Natural killer cell (primary cell): ENCODE measurements at regions of chr22 and their contacts with region 1.

Region 1: DNA sequence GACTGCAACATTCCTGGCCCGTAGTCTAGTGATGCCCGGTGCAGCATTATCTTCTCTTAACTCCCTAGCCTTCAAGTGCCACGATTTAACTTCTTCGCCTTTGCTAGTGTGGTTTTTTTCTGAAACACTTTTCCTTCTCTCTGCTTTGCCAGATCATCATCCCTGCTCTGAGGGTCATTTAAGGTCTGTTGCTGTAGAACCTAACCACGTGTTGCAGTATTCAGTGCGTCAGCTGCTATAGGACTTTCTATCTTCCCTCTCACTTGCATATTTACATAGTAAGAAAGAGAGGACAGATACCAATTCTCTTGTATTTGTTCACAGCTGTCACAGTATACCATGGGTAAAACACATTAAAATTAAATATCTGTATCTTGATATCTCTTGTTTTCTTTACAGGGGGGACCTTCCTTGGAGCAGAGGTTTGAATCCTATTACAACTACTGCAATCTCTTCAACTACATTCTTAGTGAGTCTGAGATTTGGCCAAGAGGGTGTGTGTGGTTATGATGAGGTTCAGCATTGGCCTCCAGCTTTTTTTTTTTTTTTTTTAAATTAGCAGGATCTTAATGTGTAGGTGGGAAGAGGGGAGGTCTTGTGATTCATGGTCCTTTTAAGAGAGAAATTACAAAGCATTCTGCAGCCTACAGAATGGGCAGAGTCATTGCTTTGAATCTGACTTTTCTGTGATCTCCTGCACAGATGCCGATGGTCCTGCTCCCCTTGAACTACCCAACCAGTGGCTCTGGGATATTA is 13.5 kb downstream of the EIF3L start:
- DNase-seq: no peak
- ATAC-seq: peak in 1 of 3 donors; percentile 17
- H3K4me3 ChIP-seq: no peak overlapping the region
- H3K4me3 Mint-ChIP-seq: no peak overlapping the region
- H3K27ac ChIP-seq: no peak overlapping the region
- H3K27ac Mint-ChIP-seq: no peak overlapping the region
- H3K4me1 ChIP-seq: no peaks in the 10 kb centered on the region
- H3K4me1 Mint-ChIP-seq: peaks cover 5 to 16% of the 10 kb centered on the region in 2 donors
- H3K27me3 ChIP-seq: no peaks in the 10 kb centered on the region
- H3K27me3 Mint-ChIP-seq: no peaks in the 10 kb centered on the region
- CTCF ChIP-seq: no peak

Region 2: GRCh38 chr22:37538590-37539357 is 324.0 kb before region 1 on chr22:
- intact Hi-C with region 1: loop called (anchors 2 kb)
- DNase-seq: peak; percentile 84 to 94
- ATAC-seq: peak; percentile 98 to 100 (median 100)
- H3K4me3 ChIP-seq: no peak overlapping the region
- H3K4me3 Mint-ChIP-seq: no peak overlapping the region
- H3K27ac ChIP-seq: no peak overlapping the region
- H3K27ac Mint-ChIP-seq: no peak overlapping the region
- H3K4me1 ChIP-seq: peaks cover 35% of the 10 kb centered on the region
- H3K4me1 Mint-ChIP-seq: peaks cover 7 to 19% of the 10 kb centered on the region in 2 donors
- H3K27me3 ChIP-seq: peaks cover 9% of the 10 kb centered on the region
- H3K27me3 Mint-ChIP-seq: peaks cover 7 to 22% of the 10 kb centered on the region in 2 donors
- CTCF ChIP-seq: peak; percentile 89

Region 3: GRCh38 chr22:37608477-37609239 is 254.1 kb before region 1 on chr22 and contains the start of gene GGA1:
- intact Hi-C with region 1: loop called (anchors 5 kb)
- DNase-seq: peak; percentile 92 to 99
- ATAC-seq: peak; percentile 77 to 94 (median 81)
- H3K4me3 ChIP-seq: peak within 1 kb of the TSS; percentile 84
- H3K4me3 Mint-ChIP-seq: peak within 1 kb of the TSS; percentile 98
- H3K27ac ChIP-seq: peak within 1 kb of the TSS; percentile 94
- H3K27ac Mint-ChIP-seq: peak within 1 kb of the TSS; percentile 98 to 99
- H3K4me1 ChIP-seq: peaks cover 61% of the 10 kb centered on the region
- H3K4me1 Mint-ChIP-seq: peaks cover 37 to 62% of the 10 kb centered on the region in 2 donors
- H3K27me3 ChIP-seq: no peaks in the 10 kb centered on the region
- H3K27me3 Mint-ChIP-seq: no peaks in the 10 kb centered on the region
- CTCF ChIP-seq: no peak
- total RNA-seq, gene GGA1: 69.3 to 87.8 (median 80.2) TPM

Region 4: GRCh38 chr22:37623075-37624016 is 239.4 kb before region 1 on chr22:
- intact Hi-C with region 1: loop called (anchors 1 kb)
- DNase-seq: peak; percentile 76 to 87
- ATAC-seq: peak; percentile 84 to 90 (median 86)
- H3K4me3 ChIP-seq: no peak overlapping the region
- H3K4me3 Mint-ChIP-seq: peak overlapping the region; percentile 76
- H3K27ac ChIP-seq: peak overlapping the region; percentile 52
- H3K27ac Mint-ChIP-seq: peak overlapping the region; percentile 88 to 89
- H3K4me1 ChIP-seq: peaks cover 52% of the 10 kb centered on the region
- H3K4me1 Mint-ChIP-seq: peaks cover 27 to 48% of the 10 kb centered on the region in 2 donors
- H3K27me3 ChIP-seq: no peaks in the 10 kb centered on the region
- H3K27me3 Mint-ChIP-seq: no peaks in the 10 kb centered on the region
- CTCF ChIP-seq: peak; percentile 96

Region 5: DNA sequence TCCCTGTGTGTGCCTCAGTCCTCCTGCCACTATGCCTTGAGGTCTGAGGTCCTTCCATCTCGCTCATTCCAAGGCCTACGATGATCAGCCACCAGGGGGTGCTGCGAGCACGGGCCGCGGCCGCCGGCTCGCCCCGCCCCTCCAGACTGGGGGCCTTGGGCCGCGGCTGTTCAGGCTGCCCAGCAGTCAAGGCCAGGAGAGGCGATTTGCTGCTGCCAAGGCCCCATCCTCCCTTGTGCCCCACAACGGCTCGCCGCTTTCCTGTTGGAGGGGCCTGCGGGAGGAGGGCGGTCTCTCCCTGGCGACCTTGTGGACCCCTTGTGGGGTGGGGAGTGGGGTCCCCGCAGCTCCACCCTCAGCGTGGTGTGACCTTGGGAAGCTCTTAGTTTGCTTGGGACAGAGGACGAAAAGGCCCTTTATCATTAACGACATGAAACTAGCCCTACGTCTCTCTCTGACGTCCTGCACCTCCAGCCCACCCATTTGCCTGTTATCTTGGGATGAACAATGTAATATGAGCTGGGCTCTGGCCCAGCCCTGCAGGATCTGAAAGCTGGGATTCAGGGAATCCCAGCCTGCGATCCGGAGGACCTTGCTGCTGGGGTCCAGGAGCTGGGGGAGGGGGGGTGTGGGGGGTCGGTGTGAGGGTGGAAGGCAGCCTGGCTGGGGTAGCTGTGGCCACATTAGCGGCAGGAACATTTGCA is 44.9 kb before region 1 on chr22:
- intact Hi-C with region 1: loop called (anchors 1 kb)
- DNase-seq: peak; percentile 85 to 87
- ATAC-seq: peak; percentile 84 to 88 (median 87)
- H3K4me3 ChIP-seq: no peak overlapping the region
- H3K4me3 Mint-ChIP-seq: peak overlapping the region; percentile 58
- H3K27ac ChIP-seq: no peak overlapping the region
- H3K27ac Mint-ChIP-seq: no peak overlapping the region
- H3K4me1 ChIP-seq: peaks cover 21% of the 10 kb centered on the region
- H3K4me1 Mint-ChIP-seq: peaks cover 0 to 14% of the 10 kb centered on the region in 2 donors
- H3K27me3 ChIP-seq: no peaks in the 10 kb centered on the region
- H3K27me3 Mint-ChIP-seq: peaks cover 0 to 17% of the 10 kb centered on the region in 2 donors
- CTCF ChIP-seq: peak; percentile 87

Region 6: DNA sequence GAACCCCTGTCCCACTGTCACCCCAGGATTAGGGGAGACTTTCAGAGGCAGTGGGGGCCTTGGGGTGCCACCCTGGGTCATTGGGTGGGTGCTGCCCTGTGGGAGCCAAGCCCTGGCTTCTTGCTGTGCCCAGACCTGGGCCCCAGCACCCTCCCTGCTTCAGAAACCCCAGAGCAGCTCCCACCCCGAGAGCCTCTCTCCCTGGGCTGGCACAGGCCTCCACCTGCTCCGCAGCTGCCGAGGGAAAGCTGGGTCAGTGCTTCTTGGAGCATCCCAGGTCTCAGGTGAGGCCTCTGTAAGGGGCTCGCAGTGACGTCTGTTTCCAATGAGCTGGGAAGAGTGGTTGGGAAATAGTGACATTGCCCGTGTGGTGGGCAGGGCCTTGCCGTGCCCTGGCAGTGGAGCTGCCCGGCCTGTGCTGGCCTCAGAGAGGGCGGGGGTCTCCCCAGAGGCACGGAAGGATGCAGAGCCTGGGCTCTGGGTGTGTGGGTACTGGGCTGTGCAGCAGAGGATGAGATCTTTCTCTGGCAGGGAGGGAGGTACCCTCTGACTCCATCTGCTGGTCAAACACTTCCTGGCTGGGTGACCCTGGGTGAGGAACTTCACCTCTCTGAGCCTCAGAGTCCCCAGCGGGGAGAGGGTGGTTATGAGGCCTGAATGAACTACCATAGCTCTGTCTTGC is 67.7 kb after region 1 on chr22:
- intact Hi-C with region 1: no loop called
- DNase-seq: peak in 1 of 2 donors; percentile 35
- ATAC-seq: no peak
- H3K4me3 ChIP-seq: no peak overlapping the region
- H3K4me3 Mint-ChIP-seq: no peak overlapping the region
- H3K27ac ChIP-seq: no peak overlapping the region
- H3K27ac Mint-ChIP-seq: no peak overlapping the region
- H3K4me1 ChIP-seq: peaks cover 10% of the 10 kb centered on the region
- H3K4me1 Mint-ChIP-seq: peaks cover 8 to 17% of the 10 kb centered on the region in 2 donors
- H3K27me3 ChIP-seq: no peaks in the 10 kb centered on the region
- H3K27me3 Mint-ChIP-seq: no peaks in the 10 kb centered on the region
- CTCF ChIP-seq: no peak